Panc1 (cell line): ENCODE measurements at regions of chr5 and their contacts with region 1.

Region 1: DNA sequence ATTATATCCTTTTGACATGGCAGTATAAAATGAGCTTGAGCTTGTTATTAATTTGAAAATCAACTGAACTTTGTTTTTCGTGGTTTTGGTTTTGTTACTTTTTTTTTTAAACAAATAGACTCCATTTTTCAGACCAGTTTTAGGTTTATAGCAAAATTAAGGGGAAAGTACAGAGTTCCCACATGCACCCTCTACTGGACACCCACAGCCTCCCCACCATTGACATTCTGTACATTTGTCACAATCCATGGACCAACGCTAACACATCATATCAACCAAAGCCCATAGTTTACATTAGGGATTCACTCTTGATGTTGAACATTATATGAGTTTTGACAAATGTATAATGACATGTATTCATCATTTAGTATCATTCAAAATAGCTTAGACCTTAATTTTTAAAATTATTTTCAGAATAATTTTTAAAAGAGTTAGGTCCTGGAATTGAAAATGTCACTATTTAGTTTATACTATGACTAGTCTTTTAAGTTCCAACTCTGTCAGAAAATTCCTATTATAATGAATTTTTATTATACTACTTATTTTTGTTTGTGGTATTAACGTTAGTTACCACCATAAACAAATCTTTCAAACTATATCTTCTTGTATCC is 35.3 kb upstream of the JMY start:
- DNase-seq: no peak
- ATAC-seq: peak; percentile 78
- H3K4me3 ChIP-seq: no peak overlapping the region
- H3K27ac ChIP-seq: no peak overlapping the region
- H3K4me1 ChIP-seq: no peaks in the 10 kb centered on the region
- H3K27me3 ChIP-seq: no peaks in the 10 kb centered on the region
- CTCF ChIP-seq: peak; percentile 69; the same call in 1 of the 2 replicates

Region 2: GRCh38 chr5:79386679-79387078 is 186.0 kb after region 1 on chr5:
- CTCF ChIA-PET with region 1: no interaction called
- POLR2A ChIA-PET with region 1: no interaction called
- in situ Hi-C with region 1: no loop called
- intact Hi-C with region 1: no loop called
- DNase-seq: no peak
- ATAC-seq: no peak
- H3K4me3 ChIP-seq: no peak overlapping the region
- H3K27ac ChIP-seq: no peak overlapping the region
- H3K4me1 ChIP-seq: no peaks in the 10 kb centered on the region
- H3K27me3 ChIP-seq: no peaks in the 10 kb centered on the region
- CTCF ChIP-seq: no peak

Region 3: GRCh38 chr5:79503794-79504495 is 303.3 kb after region 1 on chr5:
- CTCF ChIA-PET with region 1: no interaction called
- POLR2A ChIA-PET with region 1: interaction called, 12 read pairs
- in situ Hi-C with region 1: no loop called
- intact Hi-C with region 1: no loop called
- DNase-seq: peak; percentile 81
- ATAC-seq: peak; percentile 85; the same call in 1 of the 2 replicates
- H3K4me3 ChIP-seq: no peak overlapping the region
- H3K27ac ChIP-seq: no peak overlapping the region
- H3K4me1 ChIP-seq: peaks cover 28% of the 10 kb centered on the region
- H3K27me3 ChIP-seq: no peaks in the 10 kb centered on the region
- CTCF ChIP-seq: no peak